B cell (primary cell): ENCODE measurements at regions of chr10 and their contacts with region 1.

Region 1: DNA sequence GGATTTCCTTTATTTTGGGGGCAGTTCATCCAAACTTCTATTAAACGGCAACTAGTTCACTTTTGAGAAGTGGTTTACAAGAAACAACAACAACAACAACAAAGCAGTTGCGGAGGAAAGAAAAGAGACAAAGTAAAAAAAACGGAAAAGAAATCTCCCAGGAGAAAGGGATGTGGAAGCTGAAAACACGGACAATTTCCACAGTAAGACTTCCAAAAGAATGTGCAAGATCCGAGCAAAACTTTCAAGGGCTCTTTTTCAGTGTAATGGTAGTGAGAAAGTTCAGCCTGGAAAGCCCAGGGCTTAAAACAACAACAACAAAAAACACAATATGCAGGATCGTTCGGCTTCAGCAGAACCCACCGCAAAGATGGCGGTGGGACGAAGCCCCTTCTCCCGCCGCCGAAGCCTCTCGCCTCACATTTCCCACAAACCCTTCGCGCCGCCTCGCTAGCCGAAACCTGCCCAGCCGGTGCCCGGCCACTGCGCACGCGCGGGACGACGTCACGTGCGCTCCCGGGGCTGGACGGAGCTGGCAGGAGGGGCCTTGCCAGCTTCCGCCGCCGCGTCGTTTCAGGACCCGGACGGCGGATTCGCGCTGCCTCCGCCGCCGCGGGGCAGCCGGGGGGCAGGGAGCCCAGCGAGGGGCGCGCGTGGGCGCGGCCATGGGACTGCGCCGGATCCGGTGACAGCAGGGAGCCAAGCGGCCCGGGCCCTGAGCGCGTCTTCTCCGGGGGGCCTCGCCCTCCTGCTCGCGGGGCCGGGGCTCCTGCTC is at the start of gene TNKS2:
- DNase-seq: peak; percentile 96
- ATAC-seq: peak; percentile 75
- H3K4me3 ChIP-seq: peak within 1 kb of the TSS; percentile 77 to 91 (median 83)
- H3K4me3 Mint-ChIP-seq: peak within 1 kb of the TSS; percentile 97
- H3K27ac ChIP-seq: peak within 1 kb of the TSS; percentile 91 to 97
- H3K27ac Mint-ChIP-seq: peak within 1 kb of the TSS; percentile 99
- H3K4me1 ChIP-seq: peaks cover 34 to 36% of the 10 kb centered on the region in 2 donors
- H3K4me1 Mint-ChIP-seq: peaks cover 62% of the 10 kb centered on the region
- H3K27me3 ChIP-seq: no peaks in the 10 kb centered on the region
- H3K27me3 Mint-ChIP-seq: no peaks in the 10 kb centered on the region
- CTCF ChIP-seq: no peak
- total RNA-seq, gene TNKS2: 45.8 and 48.1 TPM in 2 replicates

Region 2: GRCh38 chr10:90871766-90872647 is 926.1 kb before region 1 on chr10 and contains the start of gene RPP30:
- CTCF ChIA-PET with region 1: no interaction called
- POLR2A ChIA-PET with region 1: no interaction called
- intact Hi-C with region 1: loop called (anchors 2 kb)
- DNase-seq: peak; percentile 86
- ATAC-seq: peak; percentile 97
- H3K4me3 ChIP-seq: peak within 1 kb of the TSS; percentile 72 to 96 (median 92)
- H3K4me3 Mint-ChIP-seq: peak within 1 kb of the TSS; percentile 92
- H3K27ac ChIP-seq: peak within 1 kb of the TSS; percentile 51 to 62
- H3K27ac Mint-ChIP-seq: peak within 1 kb of the TSS; percentile 84
- H3K4me1 ChIP-seq: peaks cover 16 to 18% of the 10 kb centered on the region in 2 donors
- H3K4me1 Mint-ChIP-seq: peaks cover 32% of the 10 kb centered on the region
- H3K27me3 ChIP-seq: peaks cover 0 to 13% (median 7%) of the 10 kb centered on the region in 4 experiments
- H3K27me3 Mint-ChIP-seq: peaks cover 27% of the 10 kb centered on the region
- CTCF ChIP-seq: no peak
- total RNA-seq, gene RPP30: 41.7 and 42.3 TPM in 2 replicates

Region 3: GRCh38 chr10:91088300-91089140 is 709.5 kb before region 1 on chr10:
- CTCF ChIA-PET with region 1: no interaction called
- POLR2A ChIA-PET with region 1: no interaction called
- intact Hi-C with region 1: no loop called
- DNase-seq: peak; percentile 57
- ATAC-seq: peak; percentile 79
- H3K4me3 ChIP-seq: no peak overlapping the region
- H3K4me3 Mint-ChIP-seq: no peak overlapping the region
- H3K27ac ChIP-seq: no peak overlapping the region
- H3K27ac Mint-ChIP-seq: no peak overlapping the region
- H3K4me1 ChIP-seq: no peaks in the 10 kb centered on the region
- H3K4me1 Mint-ChIP-seq: peaks cover 3% of the 10 kb centered on the region
- H3K27me3 ChIP-seq: no peaks in the 10 kb centered on the region
- H3K27me3 Mint-ChIP-seq: no peaks in the 10 kb centered on the region
- CTCF ChIP-seq: peak; percentile 48

Region 4: DNA sequence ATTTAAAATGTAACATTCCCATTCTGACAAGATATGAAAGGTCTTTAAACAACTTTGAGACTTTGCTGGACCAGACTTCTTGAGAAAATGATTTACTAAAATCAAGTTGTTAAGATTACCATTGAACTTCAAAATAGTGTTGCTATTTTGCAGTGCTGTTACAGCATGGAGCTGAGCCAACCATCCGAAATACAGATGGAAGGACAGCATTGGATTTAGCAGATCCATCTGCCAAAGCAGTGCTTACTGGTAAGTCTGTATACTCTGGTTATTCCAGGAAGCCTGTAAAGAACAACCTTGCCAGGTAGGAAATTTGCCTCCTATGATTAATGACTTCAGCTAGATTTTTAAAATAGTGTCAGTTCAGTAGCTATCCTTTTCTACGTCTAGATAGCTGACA is 18.9 kb after region 1 on chr10:
- CTCF ChIA-PET with region 1: interaction called, 4 read pairs
- POLR2A ChIA-PET with region 1: no interaction called
- intact Hi-C with region 1: loop called (anchors 2 kb)
- DNase-seq: no peak
- ATAC-seq: no peak
- H3K4me3 ChIP-seq: no peak overlapping the region
- H3K4me3 Mint-ChIP-seq: no peak overlapping the region
- H3K27ac ChIP-seq: no peak overlapping the region
- H3K27ac Mint-ChIP-seq: no peak overlapping the region
- H3K4me1 ChIP-seq: no peaks in the 10 kb centered on the region
- H3K4me1 Mint-ChIP-seq: peaks cover 6% of the 10 kb centered on the region
- H3K27me3 ChIP-seq: no peaks in the 10 kb centered on the region
- H3K27me3 Mint-ChIP-seq: no peaks in the 10 kb centered on the region
- CTCF ChIP-seq: no peak

Region 5: DNA sequence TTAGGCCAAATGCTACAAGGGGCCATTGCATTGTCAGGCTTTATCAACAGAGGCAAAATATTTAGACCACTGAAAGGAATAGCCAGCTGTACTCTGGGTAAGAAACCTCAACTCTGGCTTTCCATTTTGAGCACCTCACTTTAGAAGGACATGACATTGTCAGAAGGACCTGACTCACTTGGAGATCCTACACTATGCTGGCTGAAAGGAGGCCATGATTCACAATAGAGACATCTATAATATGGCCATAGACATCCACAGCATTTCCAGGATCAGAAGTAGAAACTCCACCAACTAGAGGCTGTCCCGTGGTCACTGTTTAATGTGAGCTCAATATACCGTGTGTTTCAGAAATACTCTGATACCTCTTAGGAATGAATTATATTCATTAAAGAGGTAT is 266.4 kb after region 1 on chr10:
- CTCF ChIA-PET with region 1: no interaction called
- POLR2A ChIA-PET with region 1: no interaction called
- intact Hi-C with region 1: no loop called
- DNase-seq: no peak
- ATAC-seq: no peak
- H3K4me3 ChIP-seq: no peak overlapping the region
- H3K4me3 Mint-ChIP-seq: no peak overlapping the region
- H3K27ac ChIP-seq: no peak overlapping the region
- H3K27ac Mint-ChIP-seq: no peak overlapping the region
- H3K4me1 ChIP-seq: no peaks in the 10 kb centered on the region
- H3K4me1 Mint-ChIP-seq: no peaks in the 10 kb centered on the region
- H3K27me3 ChIP-seq: no peaks in the 10 kb centered on the region
- H3K27me3 Mint-ChIP-seq: no peaks in the 10 kb centered on the region
- CTCF ChIP-seq: no peak

Region 6: DNA sequence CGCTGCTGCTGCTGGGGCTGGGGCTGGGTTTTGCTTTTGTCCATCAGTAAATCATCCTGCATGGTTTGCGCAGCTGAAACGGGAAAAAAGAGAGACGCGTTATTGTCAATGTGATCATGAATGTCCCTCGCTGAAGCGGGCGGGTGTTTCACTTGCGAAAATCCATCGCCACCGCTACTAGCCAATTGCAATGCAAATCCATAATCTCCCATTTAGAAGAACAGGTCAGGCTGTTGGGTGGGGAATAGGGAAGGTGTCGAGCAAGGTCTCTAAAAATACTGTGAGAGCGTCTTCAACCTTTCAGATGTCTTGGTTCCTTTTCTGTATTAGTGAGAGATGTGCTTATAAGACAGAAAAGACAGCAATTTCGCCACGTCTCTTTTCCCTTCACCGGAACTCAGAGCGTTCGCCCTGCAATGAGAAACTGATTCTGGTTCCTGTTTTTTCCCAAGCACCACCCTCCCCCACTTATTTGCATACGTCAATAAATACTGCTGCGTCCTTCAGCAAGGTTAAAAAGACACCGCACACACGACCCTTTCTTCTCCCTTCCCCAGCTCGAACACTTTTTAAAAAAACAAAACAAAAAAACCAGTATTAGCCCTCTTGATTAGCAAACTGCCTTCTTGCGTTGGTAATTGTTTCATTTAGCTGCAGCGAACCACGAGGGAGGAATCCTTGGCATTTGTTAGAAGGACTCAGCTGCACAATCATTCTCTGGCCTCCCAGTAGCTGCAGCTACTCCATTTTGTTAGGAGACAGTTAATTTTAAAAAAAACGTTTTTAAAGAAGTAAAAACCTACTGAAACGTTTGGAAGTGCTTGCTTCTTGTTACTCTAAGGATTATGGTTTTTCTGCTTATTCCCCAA is 442.5 kb after region 1 on chr10:
- CTCF ChIA-PET with region 1: no interaction called
- POLR2A ChIA-PET with region 1: no interaction called
- intact Hi-C with region 1: loop called (anchors 2 kb)
- DNase-seq: peak; percentile 83
- ATAC-seq: peak; percentile 72
- H3K4me3 ChIP-seq: peak overlapping the region; percentile 63 to 99 (median 91)
- H3K4me3 Mint-ChIP-seq: peak overlapping the region; percentile 96
- H3K27ac ChIP-seq: peak overlapping the region; percentile 7 to 37
- H3K27ac Mint-ChIP-seq: peak overlapping the region; percentile 93
- H3K4me1 ChIP-seq: peaks cover 19 to 30% of the 10 kb centered on the region in 2 donors
- H3K4me1 Mint-ChIP-seq: peaks cover 47% of the 10 kb centered on the region
- H3K27me3 ChIP-seq: no peaks in the 10 kb centered on the region
- H3K27me3 Mint-ChIP-seq: no peaks in the 10 kb centered on the region
- CTCF ChIP-seq: no peak

Region 7: DNA sequence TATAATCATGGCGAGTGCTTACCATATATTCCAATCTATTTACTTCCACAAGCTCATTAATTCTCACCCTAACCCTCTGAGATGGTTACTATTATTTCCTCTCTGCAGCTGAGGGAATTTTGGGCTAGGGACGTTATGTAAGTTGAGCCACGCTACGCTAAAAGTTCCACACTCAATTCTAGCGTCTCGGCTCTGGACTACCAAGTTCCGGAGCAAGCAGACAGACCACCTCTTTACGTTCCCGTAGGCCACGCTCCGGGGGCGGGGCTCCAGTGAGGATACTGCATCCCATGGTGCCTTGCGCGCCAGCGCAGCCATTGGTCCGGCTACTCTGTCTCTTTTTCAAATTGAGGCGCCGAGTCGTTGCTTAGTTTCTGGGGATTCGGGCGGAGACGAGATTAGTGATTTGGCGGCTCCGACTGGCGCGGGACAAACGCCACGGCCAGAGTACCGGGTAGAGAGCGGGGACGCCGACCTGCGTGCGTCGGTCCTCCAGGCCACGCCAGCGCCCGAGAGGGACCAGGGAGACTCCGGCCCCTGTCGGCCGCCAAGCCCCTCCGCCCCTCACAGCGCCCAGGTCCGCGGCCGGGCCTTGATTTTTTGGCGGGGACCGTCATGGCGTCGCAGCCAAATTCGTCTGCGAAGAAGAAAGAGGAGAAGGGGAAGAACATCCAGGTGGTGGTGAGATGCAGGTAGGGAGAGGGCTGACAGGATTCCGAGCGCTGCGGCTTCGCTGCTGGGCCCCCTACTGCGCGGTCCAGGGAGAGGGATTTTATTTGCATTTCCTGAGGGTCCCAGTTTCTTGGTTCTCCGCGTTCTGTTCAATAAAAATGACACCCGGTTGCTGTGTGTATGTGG is 794.9 kb after region 1 on chr10 and contains the start of gene KIF11:
- CTCF ChIA-PET with region 1: no interaction called
- POLR2A ChIA-PET with region 1: no interaction called
- intact Hi-C with region 1: loop called (anchors 5 kb)
- DNase-seq: peak; percentile 96
- ATAC-seq: peak; percentile 82
- H3K4me3 ChIP-seq: peak within 1 kb of the TSS; percentile 65 to 95 (median 84)
- H3K4me3 Mint-ChIP-seq: peak within 1 kb of the TSS; percentile 99
- H3K27ac ChIP-seq: peak within 1 kb of the TSS; percentile 82 to 92
- H3K27ac Mint-ChIP-seq: peak within 1 kb of the TSS; percentile 99
- H3K4me1 ChIP-seq: peaks cover 9 to 22% of the 10 kb centered on the region in 2 donors
- H3K4me1 Mint-ChIP-seq: peaks cover 41% of the 10 kb centered on the region
- H3K27me3 ChIP-seq: no peaks in the 10 kb centered on the region
- H3K27me3 Mint-ChIP-seq: no peaks in the 10 kb centered on the region
- CTCF ChIP-seq: no peak
- total RNA-seq, gene KIF11: 1.8 and 2.0 TPM in 2 replicates